PC-3 (cell line): ENCODE measurements at regions of chr1 and their contacts with region 1.

Region 1: DNA sequence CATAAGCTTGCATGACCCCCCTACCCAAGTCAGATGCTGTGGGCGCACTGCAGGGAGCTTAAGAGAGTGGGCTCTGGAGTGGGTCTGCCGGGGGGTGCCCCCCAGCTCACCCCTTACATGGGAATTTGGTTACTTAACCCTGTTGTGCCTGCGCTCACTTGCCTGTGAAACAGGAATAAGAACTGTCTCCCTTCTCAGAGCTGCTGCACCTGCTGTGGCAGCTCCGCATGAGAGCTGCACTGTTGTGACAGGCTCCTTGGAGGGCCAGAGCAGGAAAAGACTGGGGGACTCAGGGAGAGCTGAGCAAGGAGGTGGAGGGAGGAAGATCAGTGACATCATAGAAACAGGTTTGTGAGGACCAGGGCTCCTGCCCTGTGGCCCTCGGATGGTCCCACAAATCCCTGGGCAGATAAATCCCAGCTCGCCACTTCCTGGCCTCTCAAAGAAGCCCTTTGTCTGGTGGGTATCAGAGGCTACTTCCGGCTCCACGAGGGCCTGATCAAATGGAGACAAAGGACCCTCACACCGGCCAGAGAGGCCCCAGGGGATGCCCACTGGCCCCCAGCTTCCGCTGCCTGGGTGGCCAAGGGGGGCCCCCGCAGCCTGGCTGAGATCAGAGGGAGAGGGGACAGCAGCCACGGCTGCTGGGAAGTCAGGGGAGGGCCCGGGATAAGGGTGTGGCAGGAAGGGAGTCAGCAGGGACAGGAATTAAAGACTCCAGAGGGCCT is 28.9 kb upstream of the LAPTM5 start:
- DNase-seq: no peak
- ATAC-seq: peak; percentile 33; the same call in 1 of the 2 replicates
- H3K4me3 ChIP-seq: no peak overlapping the region
- H3K27ac ChIP-seq: no peak overlapping the region
- H3K4me1 ChIP-seq: 0 out of 2 replicates have a peak, but pooled peaks cover 4% of the 10 kb centered on the region
- H3K27me3 ChIP-seq: 0 out of 2 replicates have a peak, but pooled peaks cover 6% of the 10 kb centered on the region
- CTCF ChIP-seq: no peak

Region 2: DNA sequence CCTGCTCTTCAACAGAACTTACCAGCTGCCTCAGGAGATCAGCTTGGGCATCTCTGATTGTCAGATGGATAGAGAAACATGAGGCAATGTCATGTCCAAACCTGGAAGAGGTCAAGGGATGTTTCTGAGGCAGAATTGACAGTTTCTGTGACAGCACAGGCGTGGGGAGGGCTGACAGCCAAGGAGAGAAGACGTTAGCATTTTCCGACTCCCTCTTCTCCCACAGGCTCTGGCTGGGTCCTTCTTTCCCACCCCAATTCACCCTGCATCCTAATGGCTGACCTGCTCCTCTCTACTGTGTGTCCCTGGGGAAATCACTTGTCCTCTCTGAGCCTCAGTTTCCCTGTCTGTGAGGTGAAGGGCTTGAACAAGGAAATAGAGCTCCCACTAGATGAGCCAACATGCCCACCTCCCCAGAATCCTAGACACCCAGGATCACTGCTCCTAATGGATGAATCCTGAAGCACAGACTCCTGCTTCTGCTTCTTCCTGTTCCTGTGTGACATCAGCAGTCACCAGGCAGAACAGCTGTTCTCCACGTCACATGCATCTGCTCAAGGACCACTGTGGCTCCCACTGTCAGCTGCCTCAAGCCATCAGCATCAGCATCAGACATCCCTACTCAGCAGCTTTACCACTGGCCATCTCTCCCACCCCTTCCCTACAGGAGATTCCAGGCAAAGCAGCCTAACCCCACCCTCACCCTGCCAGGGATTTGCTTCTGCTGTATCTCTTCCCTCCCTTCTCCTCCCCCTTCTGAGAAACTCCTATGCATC is 471.1 kb before region 1 on chr1:
- CTCF ChIA-PET with region 1: no interaction called
- POLR2A ChIA-PET with region 1: interaction called, 12 read pairs
- intact Hi-C with region 1: no loop called
- DNase-seq: no peak
- ATAC-seq: no peak
- H3K4me3 ChIP-seq: no peak overlapping the region
- H3K27ac ChIP-seq: no peak overlapping the region
- H3K4me1 ChIP-seq: no peaks in the 10 kb centered on the region
- H3K27me3 ChIP-seq: peaks cover 36% of the 10 kb centered on the region
- CTCF ChIP-seq: no peak

Region 3: GRCh38 chr1:30412241-30413110 is 374.0 kb before region 1 on chr1:
- CTCF ChIA-PET with region 1: no interaction called
- POLR2A ChIA-PET with region 1: no interaction called
- intact Hi-C with region 1: no loop called
- DNase-seq: no peak
- ATAC-seq: no peak
- H3K4me3 ChIP-seq: no peak overlapping the region
- H3K27ac ChIP-seq: no peak overlapping the region
- H3K4me1 ChIP-seq: no peaks in the 10 kb centered on the region
- H3K27me3 ChIP-seq: peaks cover 15% of the 10 kb centered on the region
- CTCF ChIP-seq: no peak